Caki2 (cell line): ENCODE measurements at regions of chr1 and their contacts with region 1.

Region 1: GRCh38 chr1:204128964-204129896 is 22.6 kb downstream of the ETNK2 start:
- DNase-seq: peak; percentile 28

Region 2: GRCh38 chr1:203861379-203862184 is 267.6 kb before region 1 on chr1 and contains the start of gene SNRPE:
- in situ Hi-C with region 1: loop called (anchors 25 kb)
- DNase-seq: peak; percentile 98
- total RNA-seq, gene SNRPE: 165 and 171 TPM in 2 replicates